Heart left ventricle (tissue), 16 donors: ENCODE measurements at regions of chr10 and their contacts with region 1.

Region 1: DNA sequence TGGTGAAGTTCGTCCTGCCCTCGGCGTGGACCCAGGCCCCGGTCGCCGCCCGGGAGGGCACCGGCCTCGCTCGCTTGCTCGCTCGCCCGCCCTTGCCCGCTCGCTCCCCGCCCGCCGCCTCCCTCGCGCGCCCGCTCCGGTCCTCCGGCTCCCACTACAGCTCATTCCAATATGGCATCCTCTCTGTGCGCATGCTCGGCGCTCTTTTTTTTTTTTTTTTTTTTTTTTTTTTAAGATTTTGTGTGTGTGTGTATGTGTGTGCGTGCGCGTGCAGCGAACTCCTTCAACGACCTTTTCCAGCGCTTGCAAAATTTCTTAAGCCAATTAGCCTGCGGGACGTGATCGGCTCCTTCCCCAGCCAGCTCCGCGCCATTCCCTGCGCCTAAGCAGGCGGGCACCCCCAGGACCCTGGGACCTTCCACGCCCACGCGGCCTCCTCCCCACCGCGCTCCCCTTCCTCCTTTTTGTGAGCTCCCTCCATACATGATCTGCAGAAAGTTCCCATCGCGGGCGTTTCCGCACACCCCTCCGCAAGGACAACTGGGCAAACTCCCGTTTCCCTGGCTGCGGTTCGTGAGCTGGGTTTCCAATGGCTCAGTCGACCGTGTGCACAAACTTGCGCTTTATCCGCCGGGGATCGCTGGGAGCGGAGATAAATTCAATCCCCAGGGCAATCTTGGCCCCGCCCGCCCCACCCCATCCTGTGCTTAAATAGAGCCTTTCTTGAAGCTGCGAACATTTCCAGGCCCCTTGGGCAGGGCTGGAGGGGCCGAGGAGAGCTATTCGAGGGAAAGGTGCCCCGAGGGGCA is at the start of gene SFMBT2:
- DNase-seq: peak; percentile 68 to 80 (median 75)
- ATAC-seq: peak; percentile 24 to 75 (median 64)
- H3K4me3 ChIP-seq: peak within 1 kb of the TSS; percentile 64 to 96 (median 87)
- H3K27ac ChIP-seq: peak within 1 kb of the TSS; percentile 54 to 96 (median 92)
- H3K4me1 ChIP-seq: peaks cover under 1 to 51% (median 34%) of the 10 kb centered on the region in 12 donors
- H3K27me3 ChIP-seq: peaks cover 0 to 22% (median 0%) of the 10 kb centered on the region in 9 donors
- CTCF ChIP-seq: peak in 7 of 12 donors; percentile 9 to 31 (median 18)
- POLR2A ChIP-seq: no peak
- total RNA-seq, gene SFMBT2: 3.7 to 25.8 (median 10.0) TPM

Region 2: DNA sequence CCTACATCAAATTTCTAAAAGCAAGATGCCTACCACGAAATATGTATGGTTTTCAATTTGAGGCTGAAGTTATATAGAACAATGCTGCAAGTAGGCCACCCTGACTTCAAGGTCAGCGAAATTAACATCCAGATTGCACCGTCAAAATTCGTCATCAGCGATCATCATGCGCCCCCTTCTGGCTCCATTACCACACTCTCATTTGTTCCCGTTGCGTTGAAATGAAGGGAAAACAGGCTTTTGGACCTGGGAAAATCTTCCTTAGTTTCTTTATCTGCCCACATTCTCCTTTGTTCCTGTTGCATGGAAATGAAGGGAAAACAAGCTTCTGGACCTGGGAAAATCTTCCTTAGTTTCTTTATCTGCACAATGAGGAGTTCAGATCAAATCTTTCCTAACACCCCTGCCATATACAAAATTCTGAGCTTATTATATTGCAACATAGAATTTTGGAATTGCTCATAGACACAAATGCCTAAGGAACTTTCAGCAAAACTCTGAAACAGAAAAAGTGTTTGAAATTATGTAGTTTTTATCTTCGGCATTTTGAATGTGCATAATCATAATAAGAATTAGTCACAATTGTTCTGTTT is 732.8 kb before region 1 on chr10:
- intact Hi-C with region 1: loop called in 5 of 10 experiments (anchors 5 to 10 kb)
- DNase-seq: peak in 3 of 5 donors; percentile 30 to 49 (median 31)
- ATAC-seq: no peak
- H3K4me3 ChIP-seq: no peak overlapping the region
- H3K27ac ChIP-seq: no peak overlapping the region
- H3K4me1 ChIP-seq: peaks cover 0 to 10% (median 0%) of the 10 kb centered on the region in 12 donors
- H3K27me3 ChIP-seq: peaks cover 0 to 6% (median 0%) of the 10 kb centered on the region in 9 donors
- CTCF ChIP-seq: peak; percentile 38 to 78 (median 67)
- POLR2A ChIP-seq: no peak

Region 3: DNA sequence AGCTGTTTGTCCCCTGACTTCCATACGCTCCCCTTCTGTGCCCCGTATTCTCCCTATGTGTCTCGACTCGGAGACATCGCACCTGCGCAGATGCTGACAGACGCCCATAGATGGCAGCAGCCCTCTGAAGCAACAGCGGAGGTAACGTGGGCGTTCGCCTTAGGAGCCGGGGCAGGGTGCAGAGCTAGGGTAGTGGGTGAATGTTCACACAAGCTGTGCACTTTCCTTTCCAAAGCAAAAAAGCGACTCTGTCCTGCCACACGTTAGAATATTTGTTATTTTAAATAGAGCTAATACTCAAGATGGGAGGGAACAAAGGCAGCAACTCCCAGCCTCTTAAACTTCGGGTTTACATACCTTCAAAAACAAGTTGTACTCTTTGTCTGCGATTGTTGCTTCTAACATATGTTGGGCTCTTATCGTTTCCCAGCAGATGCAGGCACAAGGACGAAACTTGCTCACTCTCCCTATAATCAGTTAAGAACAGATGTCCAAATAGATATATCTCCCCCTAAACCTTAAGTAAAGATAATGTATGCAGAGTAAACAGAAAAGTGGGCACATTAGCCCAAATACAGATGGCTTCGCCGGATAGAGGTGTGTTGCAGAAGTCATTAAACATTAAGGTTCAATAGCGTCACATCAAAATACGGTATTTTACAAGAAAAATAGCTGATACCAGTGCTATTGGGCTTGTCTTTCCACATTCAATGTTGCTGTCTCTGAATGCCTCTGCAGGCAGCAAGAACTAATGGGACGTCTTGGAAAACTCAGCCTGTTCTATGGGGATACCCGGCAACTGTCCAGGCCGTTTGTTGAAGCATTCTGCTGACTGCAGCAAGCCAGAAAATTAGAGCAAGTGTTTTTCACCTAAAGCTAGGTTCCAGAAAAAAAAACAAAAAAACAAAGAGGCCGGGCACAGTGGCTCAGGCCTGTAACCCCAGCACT is 490.7 kb before region 1 on chr10:
- intact Hi-C with region 1: loop called in 9 of 10 experiments (anchors 2 to 10 kb)
- DNase-seq: peak; percentile 53 to 86 (median 69)
- ATAC-seq: peak; percentile 73 to 95 (median 92)
- H3K4me3 ChIP-seq: peak overlapping the region in 1 of 12 donors; percentile 7
- H3K27ac ChIP-seq: no peak overlapping the region
- H3K4me1 ChIP-seq: peaks cover 0 to 19% (median 1%) of the 10 kb centered on the region in 12 donors
- H3K27me3 ChIP-seq: peaks cover 0 to 3% (median 0%) of the 10 kb centered on the region in 9 donors
- CTCF ChIP-seq: peak; percentile 28 to 69 (median 59)
- POLR2A ChIP-seq: no peak

Region 4: DNA sequence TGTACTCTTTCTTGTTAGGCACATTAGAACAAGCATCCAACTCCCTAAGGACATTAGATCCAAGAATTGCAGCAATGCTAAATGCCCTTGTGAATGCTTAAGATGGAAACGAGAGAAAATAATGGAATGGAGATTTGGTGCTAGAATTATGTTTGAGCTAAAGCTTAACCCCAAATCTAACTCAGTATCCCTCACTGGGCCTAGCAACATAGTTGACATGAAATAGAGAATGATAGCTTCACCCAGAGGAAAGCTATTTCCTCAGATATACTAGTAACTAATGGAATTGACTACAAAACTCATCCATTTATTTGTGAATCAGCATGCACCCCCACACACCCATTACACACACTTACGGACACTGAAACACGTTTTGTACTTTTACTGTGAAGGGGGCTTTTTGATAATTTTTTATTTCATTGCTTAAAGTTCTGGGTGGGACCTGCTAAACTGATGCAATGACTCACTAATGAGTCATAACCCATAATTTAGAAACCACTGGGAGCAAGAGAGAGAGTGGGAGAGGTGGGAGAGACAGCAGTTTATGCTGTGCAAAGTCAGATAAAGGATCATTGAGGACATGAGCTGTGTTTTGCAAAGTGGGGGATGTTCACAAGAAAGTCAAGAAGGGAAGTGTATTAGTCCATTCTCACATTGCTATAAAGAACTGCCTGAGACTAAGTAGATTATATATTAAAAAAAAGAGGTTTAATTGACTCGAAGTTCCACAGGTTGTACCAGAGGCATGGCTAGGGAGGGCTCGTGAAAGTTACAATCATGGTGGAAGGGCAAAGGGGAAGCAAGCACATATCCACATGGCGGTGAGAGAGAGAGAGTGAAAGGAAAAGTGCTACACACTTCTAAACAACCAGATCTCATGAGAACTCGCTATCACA is 382.9 kb before region 1 on chr10:
- intact Hi-C with region 1: no loop called
- DNase-seq: no peak
- ATAC-seq: peak in 3 of 4 donors; percentile 18 to 74 (median 26)
- H3K4me3 ChIP-seq: no peak overlapping the region
- H3K27ac ChIP-seq: peak overlapping the region in 1 of 12 donors; percentile 63
- H3K4me1 ChIP-seq: peaks cover 0 to 21% (median 0%) of the 10 kb centered on the region in 12 donors
- H3K27me3 ChIP-seq: no peaks in the 10 kb centered on the region
- CTCF ChIP-seq: no peak
- POLR2A ChIP-seq: no peak

Region 5: DNA sequence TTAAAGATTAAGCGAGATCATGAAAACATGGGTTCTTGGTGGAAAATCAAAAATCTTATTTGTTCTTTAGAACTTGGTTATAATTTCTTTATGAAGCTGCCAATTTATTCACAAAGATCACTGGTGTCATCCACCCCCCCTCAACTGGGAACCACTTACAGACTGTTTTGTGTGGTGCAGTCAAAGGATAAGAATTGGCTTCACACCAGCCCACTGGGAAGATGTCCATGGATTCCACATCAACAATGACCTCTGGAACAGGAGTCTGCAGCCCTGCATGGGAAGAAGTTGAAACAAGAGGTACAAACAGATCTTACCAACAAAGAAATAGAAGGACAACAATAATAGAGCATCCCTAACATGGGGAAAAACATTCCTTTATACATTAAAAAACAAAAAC is 205.4 kb before region 1 on chr10:
- intact Hi-C with region 1: loop called in 1 of 10 experiments (anchors 10 kb)
- DNase-seq: peak in 4 of 5 donors; percentile 45 to 58 (median 52)
- ATAC-seq: peak; percentile 91 to 96 (median 93)
- H3K4me3 ChIP-seq: no peak overlapping the region
- H3K27ac ChIP-seq: peak overlapping the region in 4 of 12 donors; percentile 9 to 61 (median 37)
- H3K4me1 ChIP-seq: peaks cover 0 to 9% (median 0%) of the 10 kb centered on the region in 12 donors
- H3K27me3 ChIP-seq: no peaks in the 10 kb centered on the region
- CTCF ChIP-seq: no peak
- POLR2A ChIP-seq: no peak

Region 6: DNA sequence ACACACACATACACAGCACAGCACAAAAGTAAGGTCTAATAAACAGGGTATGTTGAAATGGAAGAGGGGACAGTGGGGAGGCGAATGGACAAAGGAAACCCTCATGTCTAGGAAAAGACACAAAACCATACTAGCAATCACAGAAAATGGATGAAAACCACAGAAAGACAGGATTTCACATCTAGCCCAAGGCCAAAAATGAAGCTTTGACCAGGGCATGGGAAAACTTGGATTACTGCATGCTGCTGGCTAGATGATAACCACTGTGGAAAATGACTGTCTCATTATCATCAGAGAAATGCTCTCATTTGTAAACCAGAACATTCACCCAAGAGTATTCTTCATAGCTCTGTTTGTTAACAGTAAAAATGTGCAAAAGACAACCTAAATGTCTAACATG is 88.4 kb before region 1 on chr10:
- intact Hi-C with region 1: no loop called
- DNase-seq: no peak
- ATAC-seq: no peak
- H3K4me3 ChIP-seq: no peak overlapping the region
- H3K27ac ChIP-seq: no peak overlapping the region
- H3K4me1 ChIP-seq: peaks cover 2 to 32% (median 19%) of the 10 kb centered on the region in 12 donors
- H3K27me3 ChIP-seq: no peaks in the 10 kb centered on the region
- CTCF ChIP-seq: no peak
- POLR2A ChIP-seq: no peak

Region 7: GRCh38 chr10:7337431-7338171 is 73.5 kb before region 1 on chr10:
- intact Hi-C with region 1: loop called in 5 of 10 experiments (anchors 5 to 10 kb)
- DNase-seq: no peak
- ATAC-seq: peak in 1 of 4 donors; percentile 24
- H3K4me3 ChIP-seq: no peak overlapping the region
- H3K27ac ChIP-seq: peak overlapping the region in 11 of 12 donors; percentile 6 to 64 (median 20)
- H3K4me1 ChIP-seq: peaks cover 0 to 64% (median 30%) of the 10 kb centered on the region in 12 donors
- H3K27me3 ChIP-seq: no peaks in the 10 kb centered on the region
- CTCF ChIP-seq: no peak
- POLR2A ChIP-seq: no peak